ENCODE measurements at regions of chr9 and their contacts with region 1.

Region 1: DNA sequence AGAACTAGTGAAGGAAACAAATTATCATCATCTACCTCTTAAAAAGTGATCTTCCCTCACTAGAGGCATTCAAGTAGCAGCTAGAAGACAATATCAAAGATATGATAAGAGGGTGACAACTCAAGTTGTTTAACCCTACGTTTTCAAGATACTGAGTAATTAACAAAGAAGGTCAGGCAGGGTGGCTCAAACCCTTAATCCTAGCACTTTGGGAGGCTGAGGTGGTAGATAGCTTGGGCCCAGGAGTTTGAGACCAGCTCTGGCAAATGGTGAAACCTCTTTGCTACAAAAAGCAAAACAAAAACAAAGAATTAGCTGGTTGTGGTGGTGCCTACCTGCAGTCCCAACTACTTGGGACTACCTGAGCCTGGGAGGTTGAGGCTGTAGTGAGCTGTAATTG is 408.2 kb upstream of the TUSC1 start:
- DNase-seq: no peak
- H3K4me3 ChIP-seq: no peak overlapping the region
- H3K27ac ChIP-seq: no peak overlapping the region
- H3K4me1 ChIP-seq: no peaks in the 10 kb centered on the region
- H3K27me3 ChIP-seq: no peaks in the 10 kb centered on the region
- CTCF ChIP-seq: no peak

Region 2: GRCh38 chr9:26142631-26143030 is 56.2 kb after region 1 on chr9:
- intact Hi-C with region 1: loop called (anchors 10 kb)
- DNase-seq: no peak
- H3K4me3 ChIP-seq: no peak overlapping the region
- H3K27ac ChIP-seq: no peak overlapping the region
- H3K4me1 ChIP-seq: no peaks in the 10 kb centered on the region
- H3K27me3 ChIP-seq: no peaks in the 10 kb centered on the region
- CTCF ChIP-seq: no peak

Region 3: GRCh38 chr9:26228273-26228672 is 141.9 kb after region 1 on chr9:
- intact Hi-C with region 1: no loop called
- DNase-seq: no peak
- H3K4me3 ChIP-seq: no peak overlapping the region
- H3K27ac ChIP-seq: no peak overlapping the region
- H3K4me1 ChIP-seq: no peaks in the 10 kb centered on the region
- H3K27me3 ChIP-seq: no peaks in the 10 kb centered on the region
- CTCF ChIP-seq: no peak